Breast epithelium (tissue), 4 donors: ENCODE measurements at regions of chrX and their contacts with region 1.

Region 1: GRCh38 chrX:14449782-14450181 is 79.6 kb upstream of the GLRA2 start:
- DNase-seq: no peak
- H3K4me3 ChIP-seq: no peak overlapping the region
- H3K27ac ChIP-seq: no peak overlapping the region
- H3K4me1 ChIP-seq: no peaks in the 10 kb centered on the region
- H3K27me3 ChIP-seq: peaks cover 0 to 13% of the 10 kb centered on the region in 2 donors
- CTCF ChIP-seq: no peak
- POLR2A ChIP-seq: no peak

Region 2: GRCh38 chrX:14476205-14476604 is 26.4 kb after region 1 on chrX:
- intact Hi-C with region 1: loop called (anchors 1 kb)
- DNase-seq: no peak
- H3K4me3 ChIP-seq: no peak overlapping the region
- H3K27ac ChIP-seq: peak overlapping the region in 1 of 2 donors; percentile 20
- H3K4me1 ChIP-seq: no peaks in the 10 kb centered on the region
- H3K27me3 ChIP-seq: peaks cover 0 to 19% of the 10 kb centered on the region in 2 donors
- CTCF ChIP-seq: no peak
- POLR2A ChIP-seq: no peak